Vagina (tissue), 2 donors: ENCODE measurements at regions of chr10 and their contacts with region 1.

Region 1: GRCh38 chr10:95350219-95350829 is 59.5 kb upstream of the PDLIM1 start:
- DNase-seq: no peak
- H3K4me3 ChIP-seq: no peak overlapping the region
- H3K27ac ChIP-seq: peak overlapping the region; percentile 67
- H3K4me1 ChIP-seq: peaks cover 21% of the 10 kb centered on the region
- H3K27me3 ChIP-seq: no peaks in the 10 kb centered on the region
- CTCF ChIP-seq: no peak
- POLR2A ChIP-seq: no peak

Region 2: GRCh38 chr10:95246579-95247051 is 103.7 kb before region 1 on chr10:
- intact Hi-C with region 1: loop called (anchors 10 kb)
- DNase-seq: peak in 1 of 2 donors; percentile 88
- H3K4me3 ChIP-seq: no peak overlapping the region
- H3K27ac ChIP-seq: peak overlapping the region; percentile 63
- H3K4me1 ChIP-seq: peaks cover 29% of the 10 kb centered on the region
- H3K27me3 ChIP-seq: no peaks in the 10 kb centered on the region
- CTCF ChIP-seq: peak; percentile 55 to 83 (median 82)
- POLR2A ChIP-seq: no peak